Dendritic cell treated with granulocyte-macrophage colony-stimulating factor and Interleukin-4, amounts not matched to agents 40 ng/mL and 50 ng/mL, for 4 days (primary cell): ENCODE measurements at regions of chr3 and their contacts with region 1.

Region 1: DNA sequence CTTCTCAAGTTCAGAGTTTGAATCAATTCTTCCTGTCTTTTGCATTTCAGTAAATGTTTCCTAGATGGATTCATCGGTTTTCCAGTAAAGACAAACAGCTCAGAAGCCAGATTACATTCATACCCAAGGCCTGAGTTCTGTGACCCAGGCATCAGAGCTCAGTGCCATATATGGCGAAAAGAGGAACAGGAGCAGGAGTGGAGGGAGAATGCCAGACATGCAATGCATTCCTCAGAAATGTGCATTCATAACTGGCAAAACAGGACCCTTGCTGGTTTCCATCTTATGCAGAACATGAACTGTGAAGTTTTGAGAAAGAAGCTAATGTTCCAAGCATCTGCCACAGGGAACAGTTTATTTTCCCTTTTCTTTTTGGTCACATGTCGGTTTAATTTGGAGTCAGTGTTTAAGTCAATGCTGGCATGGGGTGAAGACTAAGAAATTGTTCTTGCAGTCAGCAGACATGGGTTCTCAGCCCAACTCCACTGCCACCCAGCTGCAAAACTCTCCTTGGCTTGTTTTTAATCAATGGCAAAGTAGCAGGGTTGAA is 116.5 kb downstream of the LPP start:
- H3K4me3 Mint-ChIP-seq: peak overlapping the region; percentile 9
- H3K27ac Mint-ChIP-seq: peak overlapping the region; percentile 90
- H3K4me1 Mint-ChIP-seq: peaks cover 35% of the 10 kb centered on the region
- H3K27me3 Mint-ChIP-seq: no peaks in the 10 kb centered on the region

Region 2: GRCh38 chr3:187544296-187544695 is 726.2 kb before region 1 on chr3:
- intact Hi-C with region 1: no loop called
- H3K4me3 Mint-ChIP-seq: no peak overlapping the region
- H3K27ac Mint-ChIP-seq: no peak overlapping the region
- H3K4me1 Mint-ChIP-seq: no peaks in the 10 kb centered on the region
- H3K27me3 Mint-ChIP-seq: no peaks in the 10 kb centered on the region

Region 3: DNA sequence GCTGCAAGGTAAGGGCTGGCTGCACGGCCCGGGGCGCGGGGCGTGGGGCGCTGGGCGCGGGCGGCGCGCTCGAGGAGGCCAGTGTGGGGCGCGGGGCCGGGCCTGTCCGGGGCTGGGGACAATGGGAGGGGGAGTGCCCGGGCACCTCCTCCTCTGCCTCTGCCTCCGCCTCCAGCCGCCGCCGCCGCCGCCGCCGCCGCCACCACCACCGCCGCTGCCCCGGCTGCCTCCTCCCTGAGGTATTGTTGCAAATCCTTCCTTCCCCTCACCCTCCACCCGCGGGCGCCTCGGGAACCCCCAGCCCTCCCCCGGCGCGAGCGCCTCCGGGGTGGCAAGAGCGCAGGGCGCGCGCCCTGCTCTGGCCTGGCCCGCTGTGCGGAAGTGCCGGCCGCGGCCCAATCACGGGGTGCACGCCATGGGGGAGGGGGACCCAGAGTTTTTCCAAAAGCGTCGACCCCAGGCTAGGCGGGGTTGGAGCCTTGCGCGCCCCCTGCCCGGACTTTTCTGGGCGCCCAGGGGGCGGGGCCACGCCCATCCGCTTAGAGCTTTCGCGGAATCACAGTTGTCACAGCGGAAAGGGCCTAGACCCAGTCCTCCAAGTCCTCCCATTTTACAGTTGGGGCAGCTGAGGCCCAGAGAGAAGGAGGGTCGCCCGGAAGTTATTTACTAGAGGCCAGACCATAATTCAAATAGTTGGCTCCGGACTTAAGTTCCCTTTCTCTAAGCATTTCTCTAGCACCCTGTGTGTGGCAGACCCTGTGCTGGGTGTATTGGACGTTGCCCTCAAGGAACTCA is 116.3 kb before region 1 on chr3 and contains the start of gene LPP:
- intact Hi-C with region 1: loop called (anchors 2 kb)
- H3K4me3 Mint-ChIP-seq: peak within 1 kb of the TSS; percentile 99
- H3K27ac Mint-ChIP-seq: peak within 1 kb of the TSS; percentile 97
- H3K4me1 Mint-ChIP-seq: peaks cover 59% of the 10 kb centered on the region
- H3K27me3 Mint-ChIP-seq: no peaks in the 10 kb centered on the region

Region 4: DNA sequence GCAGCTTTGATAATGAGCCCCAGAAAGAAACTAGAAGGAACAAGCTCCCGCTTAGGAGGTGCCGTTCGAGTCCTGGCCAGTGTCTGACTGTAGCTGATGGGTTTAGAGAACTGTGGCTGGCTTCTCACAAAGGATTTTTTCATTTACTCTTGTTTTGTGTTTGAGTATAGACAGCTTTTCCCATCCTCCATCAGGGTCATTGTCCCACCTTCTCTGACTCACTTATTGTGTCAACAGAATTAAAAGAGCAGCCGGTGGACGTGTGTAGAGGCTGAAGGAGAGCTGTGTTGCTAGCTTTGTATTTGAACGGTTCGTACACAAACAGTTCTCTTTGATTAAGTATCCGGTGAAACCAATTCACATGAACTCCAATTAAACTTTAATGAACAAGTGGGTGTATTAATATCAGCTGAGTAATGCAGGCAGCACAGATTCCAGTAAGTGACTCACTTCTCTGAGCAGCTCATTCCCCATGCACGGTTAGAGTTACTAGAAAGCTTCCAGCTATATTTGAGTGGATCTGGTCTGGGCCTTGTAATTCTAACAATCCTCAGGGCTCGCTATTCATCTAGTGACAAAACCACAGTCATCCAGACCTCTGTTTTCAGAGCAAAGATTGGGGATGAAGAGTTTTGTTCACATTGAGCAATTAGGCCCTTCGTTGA is 24.5 kb after region 1 on chr3:
- intact Hi-C with region 1: no loop called
- H3K4me3 Mint-ChIP-seq: no peak overlapping the region
- H3K27ac Mint-ChIP-seq: peak overlapping the region; percentile 71
- H3K4me1 Mint-ChIP-seq: peaks cover 84% of the 10 kb centered on the region
- H3K27me3 Mint-ChIP-seq: no peaks in the 10 kb centered on the region

Region 5: GRCh38 chr3:188389711-188390342 is 119.3 kb after region 1 on chr3:
- intact Hi-C with region 1: loop called (anchors 2 kb)
- H3K4me3 Mint-ChIP-seq: peak overlapping the region; percentile 34
- H3K27ac Mint-ChIP-seq: peak overlapping the region; percentile 96
- H3K4me1 Mint-ChIP-seq: peaks cover 66% of the 10 kb centered on the region
- H3K27me3 Mint-ChIP-seq: no peaks in the 10 kb centered on the region